Heart right ventricle (tissue), 16 donors: ENCODE measurements at regions of chr11 and their contacts with region 1.

Region 1: GRCh38 chr11:96464700-96465307 is 75.0 kb downstream of the JRKL start:
- DNase-seq: no peak
- ATAC-seq: peak; percentile 85 to 97 (median 92)
- H3K4me3 ChIP-seq: peak overlapping the region in 6 of 10 donors; percentile 31 to 43 (median 38)
- H3K27ac ChIP-seq: peak overlapping the region in 2 of 10 donors; percentile 2 to 43
- H3K4me1 ChIP-seq: peaks cover 0 to 19% (median 7%) of the 10 kb centered on the region in 9 donors
- H3K27me3 ChIP-seq: peaks cover 0 to 4% (median 0%) of the 10 kb centered on the region in 7 donors
- CTCF ChIP-seq: peak; percentile 41 to 84 (median 76)

Region 2: GRCh38 chr11:96794152-96794551 is 329.3 kb after region 1 on chr11:
- intact Hi-C with region 1: loop called in 2 of 10 experiments (anchors 10 kb)
- DNase-seq: no peak
- ATAC-seq: no peak
- H3K4me3 ChIP-seq: no peak overlapping the region
- H3K27ac ChIP-seq: no peak overlapping the region
- H3K4me1 ChIP-seq: no peaks in the 10 kb centered on the region
- H3K27me3 ChIP-seq: no peaks in the 10 kb centered on the region
- CTCF ChIP-seq: no peak

Region 3: DNA sequence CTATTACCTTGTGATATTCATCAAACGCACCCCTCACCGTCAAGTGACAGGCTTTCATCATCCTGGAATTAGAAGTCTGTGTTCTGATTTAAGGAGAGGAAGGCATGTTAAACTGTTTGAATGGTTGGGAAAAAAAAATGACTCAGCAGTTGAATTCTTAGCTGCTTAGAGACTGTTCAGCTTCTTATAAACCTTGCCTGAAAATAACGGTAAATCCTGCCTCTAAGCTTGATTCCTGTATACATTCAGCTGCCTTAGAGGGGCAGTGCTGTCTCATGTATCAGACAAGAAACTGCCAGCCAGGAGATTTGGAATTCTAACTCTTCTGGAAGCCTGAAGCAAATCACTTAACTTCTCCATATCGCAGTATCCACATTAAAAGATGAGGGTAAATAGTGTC is 362.4 kb after region 1 on chr11:
- intact Hi-C with region 1: loop called in 2 of 10 experiments (anchors 10 kb)
- DNase-seq: no peak
- ATAC-seq: peak in 4 of 8 donors; percentile 61 to 73 (median 68)
- H3K4me3 ChIP-seq: no peak overlapping the region
- H3K27ac ChIP-seq: no peak overlapping the region
- H3K4me1 ChIP-seq: peaks cover 0 to 5% (median 0%) of the 10 kb centered on the region in 9 donors
- H3K27me3 ChIP-seq: no peaks in the 10 kb centered on the region
- CTCF ChIP-seq: peak in 7 of 9 donors; percentile 12 to 58 (median 49)